RWPE1 (cell line): ENCODE measurements at regions of chr7 and their contacts with region 1.

Region 1: GRCh38 chr7:129914536-129915272 is 38.1 kb downstream of the UBE2H start:
- DNase-seq: no peak
- H3K27ac ChIP-seq: peak overlapping the region; percentile 54
- CTCF ChIP-seq: no peak

Region 2: GRCh38 chr7:128933180-128933891 is 981.4 kb before region 1 on chr7:
- CTCF ChIA-PET with region 1: no interaction called
- POLR2A ChIA-PET with region 1: no interaction called
- DNase-seq: no peak
- H3K27ac ChIP-seq: no peak overlapping the region
- CTCF ChIP-seq: no peak

Region 3: DNA sequence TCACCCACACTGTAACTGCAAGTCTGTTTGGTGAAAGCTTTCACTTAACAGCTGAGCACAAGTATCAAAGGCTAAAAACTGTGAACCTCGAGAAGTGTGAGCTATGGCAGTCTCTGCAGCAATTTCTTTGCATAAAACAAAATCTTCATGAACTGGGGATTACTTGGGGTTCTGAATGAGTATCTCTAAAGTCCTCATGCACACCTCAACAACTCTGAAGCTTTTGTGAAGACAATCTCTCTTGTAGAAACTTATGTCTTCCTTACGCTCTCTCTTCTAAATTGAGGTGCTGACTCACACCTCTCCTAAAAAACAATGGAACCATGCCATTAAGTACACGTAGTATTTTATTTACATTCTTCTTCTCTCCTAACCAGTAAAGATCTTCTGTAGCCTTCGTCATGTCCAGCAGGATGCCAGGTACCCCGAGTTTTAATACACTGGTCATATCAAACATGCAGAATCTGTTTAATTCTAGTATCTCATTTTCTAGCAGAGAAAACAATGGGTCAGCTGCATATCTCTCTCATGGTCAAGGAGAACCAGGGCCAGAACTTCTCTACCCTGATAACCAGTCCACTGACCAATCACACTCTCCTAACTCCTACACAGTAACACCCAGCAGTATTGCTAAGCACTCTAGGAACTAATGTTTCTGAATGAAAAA is 38.8 kb before region 1 on chr7:
- CTCF ChIA-PET with region 1: no interaction called
- POLR2A ChIA-PET with region 1: no interaction called
- DNase-seq: peak; percentile 38
- H3K27ac ChIP-seq: no peak overlapping the region
- CTCF ChIP-seq: no peak

Region 4: GRCh38 chr7:129898502-129899160 is 16.1 kb before region 1 on chr7:
- CTCF ChIA-PET with region 1: no interaction called
- POLR2A ChIA-PET with region 1: interaction called, 10 read pairs
- DNase-seq: no peak
- H3K27ac ChIP-seq: no peak overlapping the region
- CTCF ChIP-seq: no peak